ENCODE measurements at regions of chr4 and their contacts with region 1.

Region 1: DNA sequence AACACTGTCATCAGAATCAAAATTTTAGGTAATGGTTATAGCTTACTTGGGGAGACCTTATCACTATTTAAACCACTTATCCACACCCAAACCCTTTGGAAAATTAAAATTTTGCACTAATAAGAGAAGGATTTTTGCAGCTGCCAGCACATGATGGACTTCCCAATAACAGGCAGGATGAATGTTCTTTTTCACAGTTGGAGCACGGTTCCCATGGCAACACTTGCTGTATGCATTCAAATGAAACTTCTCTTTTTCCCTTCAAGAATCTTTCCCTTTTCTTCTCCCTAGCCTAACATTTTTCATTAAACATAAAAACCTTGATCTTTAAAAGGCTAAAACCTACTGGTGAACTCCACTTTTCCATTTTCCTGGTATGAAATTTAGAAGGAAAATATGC is 768.2 kb downstream of the KCTD8 start:
- DNase-seq: no peak
- ATAC-seq: no peak
- H3K4me3 ChIP-seq: no peak overlapping the region
- H3K27ac ChIP-seq: no peak overlapping the region
- H3K4me1 ChIP-seq: no peaks in the 10 kb centered on the region
- H3K27me3 ChIP-seq: no peaks in the 10 kb centered on the region
- CTCF ChIP-seq: no peak

Region 2: GRCh38 chr4:43587758-43588157 is 92.7 kb before region 1 on chr4:
- intact Hi-C with region 1: loop called in 1 of 10 experiments (anchors 5 kb)
- DNase-seq: no peak
- ATAC-seq: no peak
- H3K4me3 ChIP-seq: no peak overlapping the region
- H3K27ac ChIP-seq: no peak overlapping the region
- H3K4me1 ChIP-seq: no peaks in the 10 kb centered on the region
- H3K27me3 ChIP-seq: no peaks in the 10 kb centered on the region
- CTCF ChIP-seq: no peak

Region 3: DNA sequence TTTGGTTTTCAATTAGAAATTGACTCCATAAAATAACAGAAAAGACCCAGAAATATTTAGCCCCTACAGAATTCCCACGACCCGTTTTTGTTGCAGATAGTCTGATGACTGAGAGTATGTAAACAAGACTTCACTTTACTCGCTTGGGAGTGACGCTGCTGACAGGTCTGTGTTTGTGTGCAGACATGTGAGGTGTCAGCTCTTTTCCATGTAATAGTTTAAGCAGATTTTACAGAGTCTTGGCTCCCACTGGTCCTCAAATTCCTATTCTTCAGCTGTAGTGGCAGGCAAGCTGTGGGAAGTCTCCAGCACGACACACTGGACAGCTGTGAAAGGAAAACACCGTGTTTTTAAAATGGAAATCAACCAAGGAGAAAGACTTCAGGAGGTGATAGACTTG is 1987.7 kb after region 1 on chr4:
- intact Hi-C with region 1: no loop called
- DNase-seq: no peak
- ATAC-seq: no peak
- H3K4me3 ChIP-seq: no peak overlapping the region
- H3K27ac ChIP-seq: no peak overlapping the region
- H3K4me1 ChIP-seq: peaks cover 0 to 13% (median 0%) of the 10 kb centered on the region in 9 donors
- H3K27me3 ChIP-seq: no peaks in the 10 kb centered on the region
- CTCF ChIP-seq: no peak

Measured in heart right ventricle (tissue), 16 donors.